SK-N-SH (cell line): ENCODE measurements at regions of chr19 and their contacts with region 1.

Region 1: DNA sequence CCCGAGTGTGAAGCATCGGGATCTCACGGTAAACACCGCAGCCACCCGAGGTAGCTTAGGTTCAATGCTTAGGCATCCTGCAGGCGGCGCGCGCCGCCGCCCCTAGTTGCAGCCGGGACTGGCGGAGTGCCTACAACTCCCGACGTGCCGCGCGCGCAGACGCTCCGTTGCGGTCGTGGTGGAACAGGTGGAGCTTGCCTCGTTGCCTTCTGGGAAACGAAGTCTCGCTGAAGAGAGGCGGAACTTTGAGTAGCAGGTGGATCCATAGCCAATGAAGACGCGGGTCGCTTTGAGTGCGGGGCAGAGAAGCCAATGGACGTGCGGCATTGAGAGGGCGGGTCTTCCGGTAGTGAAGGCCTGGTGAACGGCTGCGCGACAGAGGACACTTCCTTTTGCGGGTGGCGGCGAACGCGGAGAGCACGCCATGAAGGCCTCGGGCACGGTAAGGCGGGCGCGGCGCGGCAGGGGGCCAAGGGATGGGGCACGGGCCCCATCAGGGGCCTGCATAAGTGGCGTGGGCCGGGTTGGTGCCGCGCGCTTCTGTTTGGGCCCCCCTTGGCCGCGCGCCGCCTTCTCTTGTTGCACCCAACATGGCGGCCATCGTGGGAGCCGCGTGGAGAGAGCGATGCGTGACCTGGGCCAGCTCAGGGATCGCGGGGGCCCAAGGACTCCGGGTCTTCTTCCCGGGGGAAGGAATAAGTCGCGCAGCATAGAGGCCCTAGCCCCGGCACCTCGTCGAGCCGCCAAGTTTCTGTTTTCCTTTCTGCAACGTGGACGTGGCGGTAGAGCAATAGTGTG is at the start of gene RPL18A:
- DNase-seq: peak; percentile 96
- H3K4me3 ChIP-seq: peak within 1 kb of the TSS; percentile 86 to 91
- H3K27ac ChIP-seq: peak within 1 kb of the TSS; percentile 62 to 78
- H3K4me1 ChIP-seq: peaks cover 0 to 17% of the 10 kb centered on the region in 2 experiments; a peak in 1 of 4 replicates
- H3K27me3 ChIP-seq: no peaks in the 10 kb centered on the region
- CTCF ChIP-seq: peak; percentile 78
- EP300 ChIP-seq: no peak
- RAD21 ChIP-seq: peak; percentile 64
- polyA plus RNA-seq, gene RPL18A: 2,138 and 2,695 TPM in 2 replicates

Region 2: GRCh38 chr19:17703824-17704463 is 155.8 kb before region 1 on chr19:
- CTCF ChIA-PET with region 1: interaction called, 46 read pairs
- POLR2A ChIA-PET with region 1: no interaction called
- DNase-seq: peak; percentile 80
- H3K4me3 ChIP-seq: no peak overlapping the region
- H3K27ac ChIP-seq: no peak overlapping the region
- H3K4me1 ChIP-seq: no peaks in the 10 kb centered on the region; a peak in 1 of 4 replicates
- H3K27me3 ChIP-seq: no peaks in the 10 kb centered on the region
- CTCF ChIP-seq: peak; percentile 78
- EP300 ChIP-seq: no peak
- RAD21 ChIP-seq: peak; percentile 71

Region 3: DNA sequence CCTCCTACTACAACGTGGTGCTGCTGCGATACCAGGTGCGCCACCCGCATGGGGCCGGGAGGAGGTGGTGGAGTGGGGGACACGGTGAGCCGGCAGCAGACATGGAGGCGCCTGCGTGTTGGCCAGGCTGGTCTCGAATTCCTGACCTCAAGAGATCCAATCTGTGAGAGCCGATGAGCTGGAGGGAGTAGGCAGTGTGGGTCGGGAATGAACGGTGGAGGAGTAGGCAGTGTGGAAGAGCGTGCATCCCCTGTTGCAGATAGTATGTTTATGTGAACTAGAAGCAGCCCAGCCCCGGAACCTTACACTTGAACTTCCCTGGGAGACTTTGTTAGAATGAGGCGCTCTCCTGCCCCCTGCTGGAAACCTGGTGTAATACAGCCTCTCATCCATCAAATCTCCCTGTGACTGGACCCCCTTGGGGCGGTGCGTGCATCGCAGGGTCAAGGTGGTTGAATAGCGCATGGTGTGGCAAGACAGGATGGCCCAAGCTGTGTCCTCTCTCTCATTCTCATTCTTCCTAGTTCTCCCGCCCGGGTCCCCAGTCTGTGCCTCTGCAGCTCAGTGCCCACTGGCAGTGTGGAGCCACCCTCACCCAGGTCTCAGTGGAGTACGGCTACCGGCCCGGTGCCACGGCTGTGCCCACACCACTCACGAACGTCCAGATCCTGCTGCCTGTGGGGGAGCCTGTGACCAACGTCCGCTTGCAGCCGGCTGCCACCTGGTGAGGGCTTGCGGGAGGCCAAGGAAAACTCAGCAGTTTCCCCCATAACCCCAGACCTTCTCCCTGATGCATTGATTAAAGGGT is 75.3 kb before region 1 on chr19:
- CTCF ChIA-PET with region 1: interaction called, 24 read pairs
- POLR2A ChIA-PET with region 1: interaction called, 3 read pairs
- DNase-seq: peak; percentile 93
- H3K4me3 ChIP-seq: no peak overlapping the region; a peak in 1 of 4 replicates
- H3K27ac ChIP-seq: no peak overlapping the region
- H3K4me1 ChIP-seq: peaks cover 0 to 3% of the 10 kb centered on the region in 2 experiments; a peak in 1 of 4 replicates
- H3K27me3 ChIP-seq: no peaks in the 10 kb centered on the region
- CTCF ChIP-seq: peak; percentile 83
- EP300 ChIP-seq: no peak
- RAD21 ChIP-seq: peak; percentile 85

Region 4: GRCh38 chr19:17841810-17842662 is 17.7 kb before region 1 on chr19:
- CTCF ChIA-PET with region 1: interaction called, 20 read pairs
- POLR2A ChIA-PET with region 1: interaction called, 14 read pairs
- DNase-seq: peak; percentile 99
- H3K4me3 ChIP-seq: peak overlapping the region; percentile 45 to 50
- H3K27ac ChIP-seq: peak overlapping the region in 1 of 2 experiments; percentile 76; a peak in 1 of 4 replicates
- H3K4me1 ChIP-seq: peaks cover 0 to 14% of the 10 kb centered on the region in 2 experiments; a peak in 1 of 4 replicates
- H3K27me3 ChIP-seq: no peaks in the 10 kb centered on the region
- CTCF ChIP-seq: no peak
- EP300 ChIP-seq: no peak
- RAD21 ChIP-seq: no peak